Esophagus muscularis mucosa (tissue), 4 donors: ENCODE measurements at regions of chr7 and their contacts with region 1.

Region 1: GRCh38 chr7:7696458-7697119 is 21.8 kb downstream of the RPA3 start:
- DNase-seq: no peak
- H3K4me3 ChIP-seq: no peak overlapping the region
- H3K27ac ChIP-seq: no peak overlapping the region
- H3K4me1 ChIP-seq: peaks cover 29 to 43% (median 31%) of the 10 kb centered on the region in 4 donors
- H3K27me3 ChIP-seq: no peaks in the 10 kb centered on the region
- CTCF ChIP-seq: no peak
- EP300 ChIP-seq: no peak
- POLR2A ChIP-seq: no peak

Region 2: GRCh38 chr7:7968543-7969305 is 272.1 kb after region 1 on chr7 and contains the start of gene GLCCI1:
- intact Hi-C with region 1: loop called (anchors 10 kb)
- DNase-seq: peak; percentile 99
- H3K4me3 ChIP-seq: peak within 1 kb of the TSS; percentile 88 to 99 (median 98)
- H3K27ac ChIP-seq: peak within 1 kb of the TSS; percentile 90 to 94 (median 94)
- H3K4me1 ChIP-seq: peaks cover 12 to 28% (median 19%) of the 10 kb centered on the region in 4 donors
- H3K27me3 ChIP-seq: no peaks in the 10 kb centered on the region
- CTCF ChIP-seq: no peak
- EP300 ChIP-seq: no peak
- POLR2A ChIP-seq: peak; percentile 47
- total RNA-seq, gene GLCCI1: 2.8 to 8.3 (median 4.8) TPM